Transverse colon (tissue), 4 donors: ENCODE measurements at regions of chr2 and their contacts with region 1.

Region 1: GRCh38 chr2:167579826-167580225 is 667.6 kb downstream of the STK39 start:
- DNase-seq: no peak
- H3K4me3 ChIP-seq: no peak overlapping the region
- H3K27ac ChIP-seq: no peak overlapping the region
- H3K4me1 ChIP-seq: peaks cover 0 to 7% (median 3%) of the 10 kb centered on the region in 4 donors
- H3K27me3 ChIP-seq: no peaks in the 10 kb centered on the region
- CTCF ChIP-seq: no peak
- EP300 ChIP-seq: no peak
- POLR2A ChIP-seq: no peak

Region 2: GRCh38 chr2:166969486-166969885 is 610.3 kb before region 1 on chr2:
- in situ Hi-C with region 1: no loop called
- intact Hi-C with region 1: loop called (anchors 5 kb)
- DNase-seq: no peak
- H3K4me3 ChIP-seq: no peak overlapping the region
- H3K27ac ChIP-seq: no peak overlapping the region
- H3K4me1 ChIP-seq: peaks cover 0 to 3% (median 0%) of the 10 kb centered on the region in 4 donors
- H3K27me3 ChIP-seq: no peaks in the 10 kb centered on the region
- CTCF ChIP-seq: no peak
- EP300 ChIP-seq: no peak
- POLR2A ChIP-seq: no peak

Region 3: GRCh38 chr2:167856190-167856589 is 276.4 kb after region 1 on chr2:
- in situ Hi-C with region 1: no loop called
- intact Hi-C with region 1: no loop called
- DNase-seq: no peak
- H3K4me3 ChIP-seq: no peak overlapping the region
- H3K27ac ChIP-seq: no peak overlapping the region
- H3K4me1 ChIP-seq: no peaks in the 10 kb centered on the region
- H3K27me3 ChIP-seq: no peaks in the 10 kb centered on the region
- CTCF ChIP-seq: no peak
- EP300 ChIP-seq: no peak
- POLR2A ChIP-seq: no peak

Region 4: DNA sequence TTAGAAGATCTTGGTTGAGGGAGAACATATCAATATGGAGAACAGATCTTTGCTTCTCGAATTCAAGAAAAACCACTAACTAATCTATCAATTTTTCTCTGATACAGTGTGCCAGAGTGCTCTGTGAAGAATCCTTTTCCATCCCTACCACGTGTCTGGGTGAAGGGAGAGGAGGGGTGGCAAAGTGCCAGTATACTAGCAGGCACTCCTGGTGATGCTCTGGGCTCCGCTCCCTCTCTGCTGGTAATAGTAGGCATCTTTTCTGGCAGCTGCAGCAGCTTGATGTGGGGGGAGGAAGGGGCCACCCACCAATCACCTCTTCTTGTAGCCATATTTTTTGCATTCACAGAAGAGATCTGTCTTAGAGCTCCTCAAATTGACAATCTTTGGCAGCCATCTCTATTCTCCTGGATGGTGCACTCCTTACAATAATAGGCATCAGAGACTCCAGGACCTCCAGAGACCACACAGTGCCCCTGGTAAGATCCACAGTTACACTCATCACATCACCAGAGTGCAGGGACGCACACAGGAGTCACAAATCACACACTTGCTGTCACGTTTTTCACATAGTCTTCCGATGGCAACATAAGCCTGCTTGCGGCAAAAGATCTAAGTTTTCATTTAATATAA is 651.9 kb after region 1 on chr2:
- in situ Hi-C with region 1: no loop called
- intact Hi-C with region 1: no loop called
- DNase-seq: no peak
- H3K4me3 ChIP-seq: no peak overlapping the region
- H3K27ac ChIP-seq: no peak overlapping the region
- H3K4me1 ChIP-seq: peaks cover 0 to 13% (median 6%) of the 10 kb centered on the region in 4 donors
- H3K27me3 ChIP-seq: no peaks in the 10 kb centered on the region
- CTCF ChIP-seq: no peak
- EP300 ChIP-seq: no peak
- POLR2A ChIP-seq: no peak